Activated naive CD8-positive, alpha-beta T cell treated with anti-CD3 and anti-CD28 coated beads, Interleukin-2, amount 10 ng/mL, durations not matched to agents 7 days and 5 days (primary cell): ENCODE measurements at regions of chr9 and their contacts with region 1.

Region 1: DNA sequence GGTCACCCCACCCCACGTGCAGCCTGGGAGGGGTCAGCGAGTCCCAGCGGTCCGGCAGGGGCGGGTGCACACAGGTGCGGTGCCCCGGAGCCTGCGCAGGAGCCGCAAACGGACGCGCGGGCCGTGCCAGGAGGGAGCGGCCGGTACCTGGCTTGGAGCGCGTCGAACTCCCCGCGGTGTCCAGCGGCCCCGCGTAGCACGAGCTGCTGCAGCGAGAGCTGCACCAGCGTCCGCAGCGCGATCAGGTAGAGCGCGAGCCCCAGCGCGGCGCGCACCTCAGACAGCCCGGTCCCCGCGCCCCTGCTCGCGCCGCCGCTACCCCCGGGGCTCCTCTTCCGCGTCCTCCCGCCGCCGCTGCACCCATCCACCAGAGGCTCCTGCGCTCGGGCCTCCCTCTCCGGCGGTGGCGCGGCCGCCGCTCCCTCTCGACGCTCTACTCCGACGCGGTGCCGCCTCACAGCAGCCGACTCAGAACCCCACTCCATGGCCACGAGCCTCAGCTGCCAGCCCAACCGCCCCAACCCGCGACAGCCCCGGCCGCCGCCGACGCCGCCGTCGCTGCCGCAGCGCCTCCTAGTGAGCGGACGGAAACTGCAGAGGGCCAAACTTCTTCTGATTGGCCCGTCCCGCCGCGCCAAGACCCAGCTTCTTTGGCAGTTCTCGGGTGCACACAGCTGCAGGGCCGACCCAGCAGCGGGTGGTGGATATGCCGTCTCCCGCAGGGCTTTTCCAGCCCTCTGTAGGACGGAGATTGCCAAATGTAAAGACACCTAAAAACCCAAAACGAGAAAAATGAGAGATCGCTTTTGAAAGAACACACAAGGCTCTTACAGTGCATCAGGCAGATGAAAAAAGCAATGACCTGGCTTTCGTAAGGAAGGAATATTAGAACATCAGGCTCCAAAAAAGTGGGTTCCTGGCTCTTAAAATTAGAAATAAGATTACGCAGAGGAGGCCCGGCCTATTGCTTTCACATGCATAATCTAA is at the start of gene ERMP1:
- DNase-seq: peak; percentile 94
- ATAC-seq: peak; percentile 88
- H3K4me3 Mint-ChIP-seq: peak within 1 kb of the TSS; percentile 92
- H3K27ac Mint-ChIP-seq: peak within 1 kb of the TSS; percentile 85
- H3K4me1 Mint-ChIP-seq: peaks cover 40% of the 10 kb centered on the region
- H3K27me3 Mint-ChIP-seq: no peaks in the 10 kb centered on the region
- total RNA-seq, gene ERMP1: 26.5 to 27.7 TPM

Region 2: GRCh38 chr9:5786370-5787127 is 46.3 kb before region 1 on chr9:
- POLR2A ChIA-PET with region 1: no interaction called
- DNase-seq: no peak
- ATAC-seq: no peak
- H3K4me3 Mint-ChIP-seq: no peak overlapping the region
- H3K27ac Mint-ChIP-seq: no peak overlapping the region
- H3K4me1 Mint-ChIP-seq: peaks cover 5% of the 10 kb centered on the region
- H3K27me3 Mint-ChIP-seq: no peaks in the 10 kb centered on the region

Region 3: DNA sequence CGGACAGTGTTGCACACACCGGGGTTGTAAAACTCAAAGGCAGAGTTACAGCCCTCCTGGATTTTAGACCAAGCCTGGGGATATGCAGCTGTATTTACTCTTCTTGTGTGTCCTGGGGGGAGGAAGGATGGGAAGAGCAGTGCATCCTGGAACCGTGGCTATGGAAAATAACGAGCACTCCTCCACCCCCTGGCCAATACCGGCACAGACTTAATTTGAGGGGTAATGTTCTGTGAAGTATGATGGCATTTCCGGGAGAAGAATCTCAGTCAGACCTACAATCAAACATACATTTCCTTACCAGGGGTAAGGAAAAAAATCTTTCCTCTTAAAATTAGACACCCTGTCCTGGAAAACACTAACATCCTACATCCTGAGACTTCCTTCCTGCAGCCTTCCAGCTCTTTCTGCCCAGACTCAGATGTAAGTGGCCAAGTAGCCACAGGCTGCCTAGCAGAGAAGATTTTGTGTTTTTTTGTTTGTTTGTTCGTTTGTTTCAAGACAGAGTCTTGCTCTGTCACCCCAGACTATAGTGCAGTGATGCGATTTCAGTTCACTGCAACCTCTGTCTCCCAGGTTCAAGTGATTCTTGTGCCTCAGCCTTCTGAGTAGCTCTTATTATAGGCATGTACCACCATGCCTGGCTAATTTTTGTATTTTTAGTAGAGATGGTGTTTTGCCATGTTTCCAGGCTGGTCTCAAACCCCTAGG is 11.1 kb after region 1 on chr9:
- POLR2A ChIA-PET with region 1: interaction called, 72 read pairs
- DNase-seq: no peak
- ATAC-seq: peak; percentile 35
- H3K4me3 Mint-ChIP-seq: peak overlapping the region; percentile 79
- H3K27ac Mint-ChIP-seq: peak overlapping the region; percentile 93
- H3K4me1 Mint-ChIP-seq: peaks cover 68% of the 10 kb centered on the region
- H3K27me3 Mint-ChIP-seq: peaks cover 4% of the 10 kb centered on the region

Region 4: DNA sequence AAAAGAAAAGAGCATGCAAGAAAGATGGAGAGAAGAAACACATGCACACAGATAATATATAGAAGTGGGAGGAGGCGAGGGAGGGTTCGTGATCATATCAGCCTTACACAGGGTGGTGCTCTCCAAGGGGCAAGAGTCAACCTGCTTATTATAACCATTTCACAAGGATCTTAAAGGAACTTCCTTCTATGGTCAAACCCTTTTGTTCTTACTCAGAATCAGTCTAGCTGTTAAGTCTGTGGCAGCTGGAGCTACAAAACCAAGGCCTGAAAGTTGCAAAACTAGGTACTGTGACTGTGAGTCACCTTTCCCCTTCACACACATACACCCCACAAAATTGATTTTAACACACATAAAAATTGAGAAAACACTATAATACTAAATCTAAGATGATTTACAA is 18.6 kb after region 1 on chr9:
- POLR2A ChIA-PET with region 1: interaction called, 72 read pairs
- DNase-seq: no peak
- ATAC-seq: peak; percentile 96
- H3K4me3 Mint-ChIP-seq: peak overlapping the region; percentile 50
- H3K27ac Mint-ChIP-seq: peak overlapping the region; percentile 74
- H3K4me1 Mint-ChIP-seq: peaks cover 53% of the 10 kb centered on the region
- H3K27me3 Mint-ChIP-seq: no peaks in the 10 kb centered on the region

Region 5: DNA sequence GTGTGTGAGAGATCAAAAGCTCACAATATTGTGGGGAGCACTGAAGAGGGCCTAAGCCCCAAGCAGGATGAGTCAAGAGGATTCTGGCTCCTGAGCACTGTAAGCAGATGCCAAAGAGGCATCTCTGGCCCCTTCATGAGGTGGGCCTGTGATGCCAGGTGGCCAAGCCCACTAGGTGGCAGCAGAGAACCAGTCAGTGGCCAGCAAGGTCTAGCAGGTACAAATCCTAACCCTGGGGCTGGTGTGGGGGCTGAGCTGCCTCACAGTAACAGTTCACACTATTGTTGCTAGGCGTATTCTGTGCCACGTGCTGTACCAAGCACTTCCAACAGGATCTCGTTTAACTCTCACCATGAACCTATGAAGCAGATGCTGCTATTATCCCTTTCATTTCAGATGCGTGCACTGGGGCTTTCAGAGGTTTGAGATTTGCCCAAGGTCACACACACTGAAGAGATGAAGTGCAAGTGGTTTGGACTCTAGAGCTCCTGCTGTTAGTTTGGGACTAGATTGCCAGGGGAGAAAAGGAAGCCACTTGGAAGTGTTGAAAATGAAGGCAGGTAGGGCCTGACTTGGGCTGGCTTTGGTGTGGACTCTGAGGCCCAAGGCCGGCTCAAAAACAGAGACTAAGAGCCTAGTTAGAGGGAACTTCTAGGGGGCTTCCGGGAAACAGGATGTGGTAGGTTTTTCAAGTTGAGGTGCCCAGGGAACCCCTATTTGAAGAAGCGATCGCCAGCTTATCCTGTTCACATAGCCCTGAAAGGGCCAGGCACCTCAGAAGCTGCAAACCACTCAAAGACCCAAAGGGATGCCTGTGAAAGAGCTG is 53.5 kb after region 1 on chr9:
- POLR2A ChIA-PET with region 1: interaction called, 11 read pairs
- DNase-seq: peak; percentile 83
- ATAC-seq: peak; percentile 99
- H3K4me3 Mint-ChIP-seq: peak overlapping the region; percentile 5
- H3K27ac Mint-ChIP-seq: peak overlapping the region; percentile 66
- H3K4me1 Mint-ChIP-seq: peaks cover 13% of the 10 kb centered on the region
- H3K27me3 Mint-ChIP-seq: no peaks in the 10 kb centered on the region

Region 6: DNA sequence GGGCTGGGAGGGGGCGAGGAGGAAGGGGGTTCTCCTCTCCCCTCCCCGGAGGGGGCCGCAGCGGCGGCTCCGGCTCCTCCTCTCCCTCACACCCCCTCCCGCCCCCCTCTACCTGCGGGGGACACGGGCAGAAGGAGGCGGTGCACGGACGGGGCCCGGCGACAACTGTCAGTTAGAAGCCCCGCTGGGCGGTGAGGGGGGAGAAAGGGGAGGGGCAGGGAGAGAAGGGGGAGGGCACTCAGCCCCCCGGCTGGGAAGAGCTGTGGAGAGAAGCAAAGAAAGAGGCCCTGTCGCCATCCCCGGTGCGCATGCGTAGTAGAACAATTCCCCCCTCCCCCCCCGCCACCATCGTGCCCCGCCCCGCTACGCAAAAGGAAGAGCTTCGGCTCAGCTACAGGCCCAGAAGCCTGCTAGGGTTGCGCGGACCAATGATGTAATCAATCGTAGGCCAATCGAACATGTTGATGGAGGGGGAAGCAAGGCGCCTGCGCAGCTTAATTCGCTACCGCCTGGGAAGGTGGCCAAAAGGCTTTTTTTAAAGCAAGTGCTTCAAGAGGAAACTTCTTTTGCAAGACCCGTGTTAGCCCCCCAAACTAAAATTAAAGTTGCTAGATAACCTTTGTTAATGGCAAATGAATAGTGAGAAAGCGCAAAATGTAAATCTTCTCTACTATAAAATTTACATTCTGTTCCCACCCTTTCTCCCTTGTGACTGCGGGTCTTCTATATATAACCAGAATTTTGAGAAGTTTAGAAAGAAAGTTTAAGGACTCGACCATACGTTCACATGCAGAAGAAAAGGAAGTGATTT is 175.5 kb after region 1 on chr9:
- POLR2A ChIA-PET with region 1: interaction called, 21 read pairs
- DNase-seq: peak; percentile 87
- ATAC-seq: peak; percentile 77
- H3K4me3 Mint-ChIP-seq: peak overlapping the region; percentile 81
- H3K27ac Mint-ChIP-seq: peak overlapping the region; percentile 86
- H3K4me1 Mint-ChIP-seq: peaks cover 38% of the 10 kb centered on the region
- H3K27me3 Mint-ChIP-seq: no peaks in the 10 kb centered on the region